Motor neuron (in vitro differentiated cells): ENCODE measurements at regions of chrX and their contacts with region 1.

Region 1: GRCh38 chrX:107627838-107628661 is at the start of gene PRPS1:
- ATAC-seq: peak; percentile 95 to 99 (median 98)
- H3K4me3 ChIP-seq: peak within 1 kb of the TSS; percentile 49 to 84 (median 66)
- H3K27ac ChIP-seq: peak within 1 kb of the TSS; percentile 77 to 84
- H3K4me1 ChIP-seq: no peaks in the 10 kb centered on the region
- total RNA-seq, gene PRPS1: 33.3 to 57.3 (median 41.2) TPM

Region 2: GRCh38 chrX:107537815-107538214 is 90.2 kb before region 1 on chrX:
- in situ Hi-C with region 1: loop called in 1 of 9 experiments (anchors 25 kb)
- ATAC-seq: peak in 3 of 8 experiments; percentile 71 to 89 (median 74)
- H3K4me3 ChIP-seq: no peak overlapping the region
- H3K27ac ChIP-seq: no peak overlapping the region
- H3K4me1 ChIP-seq: peaks cover 12 to 13% of the 10 kb centered on the region in 2 donors